ENCODE measurements at regions of chrX and their contacts with region 1.

Region 1: DNA sequence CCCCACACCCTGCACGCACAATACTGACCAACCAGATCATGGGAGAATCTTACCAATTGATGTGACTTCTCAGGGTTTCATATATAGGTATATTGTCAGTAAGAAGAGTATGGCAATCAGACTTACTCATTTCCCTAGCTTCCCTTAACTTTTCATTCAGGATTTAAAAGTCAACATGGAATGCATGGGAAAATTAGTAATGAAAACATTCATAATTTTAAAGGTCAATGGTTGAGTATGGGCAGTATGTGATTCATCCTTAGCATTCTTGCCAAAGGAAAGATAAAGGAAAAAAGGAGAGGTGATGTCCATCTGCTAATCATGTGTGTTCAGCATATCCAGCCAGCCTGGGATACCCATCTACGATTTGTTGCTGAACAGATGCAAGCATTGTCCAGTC is 4.0 kb downstream of the DIPK2B start:
- DNase-seq: peak; percentile 86
- H3K4me3 ChIP-seq: no peak overlapping the region
- H3K27ac ChIP-seq: peak overlapping the region; percentile 91
- H3K4me1 ChIP-seq: peaks cover 53% of the 10 kb centered on the region
- H3K27me3 ChIP-seq: no peaks in the 10 kb centered on the region
- CTCF ChIP-seq: no peak
- POLR2A ChIP-seq: no peak

Region 2: GRCh38 chrX:44542567-44543325 is 654.0 kb before region 1 on chrX and contains the start of gene FUNDC1:
- CTCF ChIA-PET with region 1: no interaction called
- POLR2A ChIA-PET with region 1: interaction called, 3 read pairs
- dilution Hi-C with region 1: no loop called
- intact Hi-C with region 1: loop called (anchors 5 kb)
- DNase-seq: peak; percentile 96
- H3K4me3 ChIP-seq: peak within 1 kb of the TSS; percentile 56 to 72 (median 65)
- H3K27ac ChIP-seq: peak within 1 kb of the TSS; percentile 76
- H3K4me1 ChIP-seq: peaks cover 12% of the 10 kb centered on the region
- H3K27me3 ChIP-seq: no peaks in the 10 kb centered on the region
- CTCF ChIP-seq: no peak
- POLR2A ChIP-seq: no peak
- total RNA-seq, gene FUNDC1: 9.7 and 15.4 TPM in 2 replicates

Region 3: DNA sequence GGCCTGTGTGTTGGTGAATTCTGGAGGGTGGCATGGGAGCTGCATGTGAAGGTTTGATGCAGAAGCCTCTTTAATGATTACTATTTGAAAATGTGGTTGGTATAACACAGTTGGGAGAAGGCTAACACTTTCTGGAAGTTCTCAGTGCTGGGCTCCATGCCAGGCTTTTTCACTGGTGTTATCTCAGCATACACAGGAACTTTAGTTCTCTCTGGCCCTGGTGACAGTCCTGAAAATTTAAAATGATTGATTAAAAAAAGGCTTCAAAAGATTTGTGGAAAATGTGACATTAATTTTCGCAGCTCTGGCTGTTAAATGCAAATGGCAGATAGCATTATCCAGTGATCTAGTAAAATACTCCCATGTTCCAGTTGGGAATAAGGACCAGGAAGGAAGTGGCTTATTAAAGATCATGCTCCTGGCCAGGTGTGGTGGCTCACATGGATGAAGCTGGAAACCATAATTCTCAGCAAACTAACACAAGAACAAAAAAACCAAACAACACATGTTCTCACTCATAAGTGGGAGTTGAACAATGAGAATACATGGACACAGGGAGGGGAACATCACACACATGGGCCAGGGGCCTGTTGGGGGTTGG is 32.6 kb before region 1 on chrX:
- CTCF ChIA-PET with region 1: no interaction called
- POLR2A ChIA-PET with region 1: no interaction called
- dilution Hi-C with region 1: no loop called
- intact Hi-C with region 1: no loop called
- DNase-seq: peak; percentile 10
- H3K4me3 ChIP-seq: no peak overlapping the region
- H3K27ac ChIP-seq: no peak overlapping the region
- H3K4me1 ChIP-seq: no peaks in the 10 kb centered on the region
- H3K27me3 ChIP-seq: no peaks in the 10 kb centered on the region
- CTCF ChIP-seq: no peak
- POLR2A ChIP-seq: no peak

Region 4: DNA sequence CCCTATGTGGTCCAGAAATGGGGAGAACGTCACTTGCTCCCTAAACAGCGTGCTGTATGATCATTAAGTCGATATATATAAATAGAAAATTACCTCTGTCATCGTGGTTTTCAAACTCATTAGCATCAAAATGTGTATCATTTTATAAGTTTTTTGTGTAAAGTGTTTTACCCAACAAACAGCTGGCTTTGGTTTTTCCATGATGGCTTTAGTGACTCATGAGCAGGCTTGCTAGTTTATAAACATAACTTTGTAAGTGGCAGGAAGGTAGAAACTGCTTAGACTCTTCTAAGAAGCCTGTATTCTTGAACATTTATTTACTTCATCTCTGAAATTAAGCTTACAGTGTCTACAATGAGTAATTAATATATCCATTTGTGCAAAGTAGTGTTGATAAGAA is 112.4 kb after region 1 on chrX:
- CTCF ChIA-PET with region 1: no interaction called
- POLR2A ChIA-PET with region 1: no interaction called
- dilution Hi-C with region 1: no loop called
- intact Hi-C with region 1: loop called (anchors 5 kb)
- DNase-seq: no peak
- H3K4me3 ChIP-seq: no peak overlapping the region
- H3K27ac ChIP-seq: no peak overlapping the region
- H3K4me1 ChIP-seq: peaks cover 2% of the 10 kb centered on the region
- H3K27me3 ChIP-seq: no peaks in the 10 kb centered on the region
- CTCF ChIP-seq: no peak
- POLR2A ChIP-seq: no peak

Region 5: GRCh38 chrX:45479835-45480422 is 283.2 kb after region 1 on chrX:
- CTCF ChIA-PET with region 1: no interaction called
- POLR2A ChIA-PET with region 1: no interaction called
- dilution Hi-C with region 1: no loop called
- intact Hi-C with region 1: loop called (anchors 1 kb)
- DNase-seq: peak; percentile 79
- H3K4me3 ChIP-seq: no peak overlapping the region
- H3K27ac ChIP-seq: peak overlapping the region; percentile 98
- H3K4me1 ChIP-seq: peaks cover 26% of the 10 kb centered on the region
- H3K27me3 ChIP-seq: no peaks in the 10 kb centered on the region
- CTCF ChIP-seq: no peak
- POLR2A ChIP-seq: no peak

Region 6: DNA sequence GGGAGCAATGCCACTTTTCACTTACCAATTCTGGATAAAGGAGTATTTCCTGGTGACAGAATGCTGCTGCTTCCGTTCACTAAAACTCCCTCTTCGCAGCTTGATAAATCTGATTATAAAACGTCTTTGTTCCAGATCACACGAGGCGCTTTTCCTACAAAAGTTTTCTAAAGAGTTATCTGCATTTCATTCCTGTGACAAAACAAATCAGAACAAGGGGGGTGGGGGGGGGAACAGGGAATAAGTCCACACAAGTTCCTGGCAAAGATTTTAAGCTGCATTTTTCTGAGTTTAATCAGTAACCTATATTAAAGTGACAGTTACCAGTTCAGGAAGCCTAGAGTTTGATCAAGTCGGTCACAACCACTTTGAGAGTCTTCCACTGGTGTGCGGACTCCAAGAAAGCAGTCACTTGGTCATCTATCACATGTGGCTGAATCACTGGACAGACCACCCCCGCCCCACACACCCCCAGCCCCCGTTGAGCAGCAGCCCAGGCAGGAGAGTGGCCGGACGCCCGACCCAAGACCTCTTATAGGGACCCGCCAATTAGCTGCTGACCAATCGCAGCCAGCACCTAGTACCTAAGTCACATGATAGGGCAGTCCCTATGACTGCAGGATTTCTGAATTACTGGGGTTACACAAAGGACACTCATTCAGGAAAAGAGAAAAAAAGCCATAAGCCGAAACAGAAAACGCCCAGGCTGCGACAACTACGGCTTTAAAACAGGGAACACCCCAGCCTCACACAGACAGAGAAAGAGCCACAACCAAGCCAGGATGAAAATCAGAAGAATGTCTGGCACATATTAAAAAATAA is 573.3 kb after region 1 on chrX:
- CTCF ChIA-PET with region 1: no interaction called
- POLR2A ChIA-PET with region 1: no interaction called
- dilution Hi-C with region 1: no loop called
- intact Hi-C with region 1: loop called (anchors 5 kb)
- DNase-seq: peak; percentile 87
- H3K4me3 ChIP-seq: peak overlapping the region; percentile 55 to 100 (median 94)
- H3K27ac ChIP-seq: peak overlapping the region; percentile 87
- H3K4me1 ChIP-seq: peaks cover 40% of the 10 kb centered on the region
- H3K27me3 ChIP-seq: no peaks in the 10 kb centered on the region
- CTCF ChIP-seq: no peak
- POLR2A ChIP-seq: peak; percentile 70

Region 7: DNA sequence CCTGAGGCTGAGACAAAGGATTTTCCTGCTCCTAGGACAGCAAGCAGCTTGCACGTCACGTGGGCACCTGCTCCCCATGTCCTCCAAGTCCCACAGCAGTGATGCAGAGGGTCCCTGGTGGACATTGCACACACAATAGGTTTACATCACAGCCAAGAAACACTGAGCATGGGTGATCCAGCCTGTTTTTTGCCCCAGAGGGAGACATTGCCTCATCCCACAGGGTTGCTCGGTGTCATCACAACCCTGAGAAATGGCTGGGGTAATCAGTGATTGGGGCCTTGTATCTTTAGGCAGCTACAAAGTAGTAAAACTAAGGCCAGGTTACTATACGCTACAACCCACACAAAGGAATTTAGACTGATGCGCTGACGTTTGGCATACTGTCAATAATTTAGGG is 1928.4 kb after region 1 on chrX:
- CTCF ChIA-PET with region 1: no interaction called
- POLR2A ChIA-PET with region 1: no interaction called
- dilution Hi-C with region 1: no loop called
- intact Hi-C with region 1: no loop called
- DNase-seq: no peak
- H3K4me3 ChIP-seq: no peak overlapping the region
- H3K27ac ChIP-seq: no peak overlapping the region
- H3K4me1 ChIP-seq: no peaks in the 10 kb centered on the region
- H3K27me3 ChIP-seq: no peaks in the 10 kb centered on the region
- CTCF ChIP-seq: no peak
- POLR2A ChIP-seq: no peak

Measured in endothelial cell of umbilical vein (primary cell).